ENCODE measurements at regions of chr20 and their contacts with region 1.

Region 1: GRCh38 chr20:1437235-1437904 is 29.3 kb downstream of the NSFL1C start:
- DNase-seq: peak; percentile 79 to 84 (median 80)
- ATAC-seq: peak; percentile 84 to 91 (median 88)
- H3K4me3 ChIP-seq: no peak overlapping the region
- H3K27ac ChIP-seq: no peak overlapping the region
- H3K4me1 ChIP-seq: no peaks in the 10 kb centered on the region
- H3K27me3 ChIP-seq: no peaks in the 10 kb centered on the region
- CTCF ChIP-seq: peak; percentile 87 to 90 (median 88)
- POLR2A ChIP-seq: no peak

Region 2: DNA sequence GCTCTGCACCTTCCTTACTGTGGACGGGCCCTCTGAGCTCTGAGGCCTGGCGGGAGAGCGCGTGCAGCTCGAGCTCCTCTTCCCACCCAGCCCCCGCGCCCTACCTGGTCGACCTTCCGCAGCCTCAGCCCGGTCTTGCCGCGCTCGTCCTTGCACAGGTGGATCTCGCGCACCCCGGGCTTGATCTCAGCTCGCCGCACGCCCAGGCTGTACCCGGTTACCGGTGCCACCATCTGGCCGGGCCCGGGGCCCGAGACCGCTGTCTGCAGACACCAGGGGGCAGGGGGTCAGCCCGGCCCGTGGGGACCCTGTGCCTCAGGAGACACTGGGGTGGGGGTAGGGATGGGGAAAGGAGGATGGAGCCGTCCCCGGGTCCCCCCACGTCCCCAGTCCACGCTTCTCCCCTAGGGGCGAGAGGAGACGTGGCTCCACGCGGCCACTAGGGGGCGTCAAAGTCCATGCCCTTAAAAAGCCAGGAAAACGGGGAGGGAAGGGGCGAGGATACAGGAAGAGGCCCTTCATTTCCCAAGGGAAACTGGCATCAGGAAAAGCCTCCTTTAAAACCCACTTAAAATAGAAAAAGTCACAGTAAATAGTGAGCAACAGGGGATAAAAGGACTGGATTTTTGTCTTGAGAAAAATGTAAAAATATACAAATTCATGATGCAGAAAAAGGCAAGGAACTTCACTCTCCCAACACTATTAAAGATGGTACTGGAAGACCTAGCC is 124.0 kb before region 1 on chr20:
- intact Hi-C with region 1: loop called (anchors 5 kb)
- DNase-seq: peak; percentile 73 to 76 (median 74)
- ATAC-seq: peak; percentile 77 to 90 (median 86)
- H3K4me3 ChIP-seq: peak overlapping the region in 1 of 3 donors; percentile 4
- H3K27ac ChIP-seq: no peak overlapping the region
- H3K4me1 ChIP-seq: peaks cover 0 to 13% (median 2%) of the 10 kb centered on the region in 4 donors
- H3K27me3 ChIP-seq: no peaks in the 10 kb centered on the region
- CTCF ChIP-seq: peak; percentile 92 to 98 (median 98)
- POLR2A ChIP-seq: no peak

Region 3: DNA sequence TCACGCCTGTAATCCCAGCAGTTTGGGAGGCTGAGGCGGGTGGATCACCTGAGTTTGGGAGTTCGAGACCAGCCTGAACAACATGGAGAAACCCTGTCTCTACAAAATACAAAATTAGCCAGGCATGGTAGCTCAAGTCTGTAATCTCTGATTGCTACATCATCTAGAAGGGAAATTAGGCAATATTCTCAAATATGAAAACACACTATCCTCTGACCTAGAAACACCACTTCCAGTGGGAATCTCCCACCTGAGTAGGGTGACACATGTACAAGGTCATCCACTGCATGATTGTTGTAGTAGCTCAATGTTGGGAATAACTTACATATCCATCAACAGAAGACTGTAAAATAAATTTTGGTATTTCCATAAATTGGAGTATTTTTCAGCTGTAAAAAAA is 139.3 kb after region 1 on chr20:
- intact Hi-C with region 1: no loop called
- DNase-seq: no peak
- ATAC-seq: no peak
- H3K4me3 ChIP-seq: no peak overlapping the region
- H3K27ac ChIP-seq: no peak overlapping the region
- H3K4me1 ChIP-seq: no peaks in the 10 kb centered on the region
- H3K27me3 ChIP-seq: no peaks in the 10 kb centered on the region
- CTCF ChIP-seq: no peak
- POLR2A ChIP-seq: no peak